Mammary epithelial cell (primary cell): ENCODE measurements at regions of chr15 and their contacts with region 1.

Region 1: DNA sequence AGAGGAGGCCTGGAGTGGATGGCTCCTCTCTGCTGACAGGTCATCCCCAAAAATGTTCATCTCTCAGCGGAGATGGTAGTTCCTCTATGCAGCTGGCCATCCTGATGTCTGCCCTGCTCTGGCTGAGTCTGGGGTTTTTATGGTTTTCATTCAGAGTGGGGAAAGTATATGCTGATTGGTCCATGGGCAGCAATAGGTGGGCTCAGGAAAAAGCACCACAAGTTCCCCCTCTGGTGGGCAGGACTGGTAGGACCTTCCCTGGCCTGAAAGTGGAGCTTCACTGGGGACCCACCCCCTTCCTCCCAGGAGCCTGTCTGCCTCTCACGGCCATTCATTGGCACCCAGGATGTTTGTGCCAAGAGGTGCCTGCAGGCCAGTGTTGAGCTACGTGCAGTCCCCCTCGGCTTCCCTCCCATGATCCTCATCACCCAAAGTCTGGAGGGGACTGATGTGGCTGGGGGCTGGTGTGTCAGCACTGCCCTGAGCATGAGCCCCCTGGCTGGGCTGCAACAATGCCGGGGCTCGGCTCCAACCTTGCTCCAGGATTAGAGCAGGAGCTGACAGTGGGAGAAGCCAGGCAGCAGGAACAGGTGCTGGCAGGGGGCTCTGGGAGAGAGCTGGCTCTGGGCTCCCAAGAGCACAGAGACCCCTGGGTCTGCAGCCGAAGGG is 13.1 kb upstream of the BLOC1S6 start:
- DNase-seq: no peak
- H3K4me3 ChIP-seq: no peak overlapping the region
- H3K27ac ChIP-seq: no peak overlapping the region
- H3K4me1 ChIP-seq: no peaks in the 10 kb centered on the region
- H3K27me3 ChIP-seq: peaks cover 5% of the 10 kb centered on the region
- CTCF ChIP-seq: peak; percentile 19 to 29

Region 2: GRCh38 chr15:45529613-45530012 is 44.5 kb before region 1 on chr15:
- CTCF ChIA-PET with region 1: no interaction called
- dilution Hi-C with region 1: loop called (anchors 5 kb)
- in situ Hi-C with region 1: no loop called
- intact Hi-C with region 1: no loop called
- DNase-seq: no peak
- H3K4me3 ChIP-seq: no peak overlapping the region
- H3K27ac ChIP-seq: no peak overlapping the region
- H3K4me1 ChIP-seq: no peaks in the 10 kb centered on the region
- H3K27me3 ChIP-seq: no peaks in the 10 kb centered on the region
- CTCF ChIP-seq: no peak

Region 3: GRCh38 chr15:45604326-45604725 is 30.2 kb after region 1 on chr15:
- CTCF ChIA-PET with region 1: no interaction called
- dilution Hi-C with region 1: no loop called
- in situ Hi-C with region 1: no loop called
- intact Hi-C with region 1: no loop called
- DNase-seq: no peak
- H3K4me3 ChIP-seq: no peak overlapping the region
- H3K27ac ChIP-seq: no peak overlapping the region
- H3K4me1 ChIP-seq: no peaks in the 10 kb centered on the region
- H3K27me3 ChIP-seq: no peaks in the 10 kb centered on the region
- CTCF ChIP-seq: no peak

Region 4: GRCh38 chr15:45660231-45660979 is 86.3 kb after region 1 on chr15:
- CTCF ChIA-PET with region 1: no interaction called
- dilution Hi-C with region 1: no loop called
- in situ Hi-C with region 1: loop called in 1 of 2 experiments (anchors 25 kb)
- intact Hi-C with region 1: no loop called
- DNase-seq: peak; percentile 33
- H3K4me3 ChIP-seq: no peak overlapping the region
- H3K27ac ChIP-seq: no peak overlapping the region
- H3K4me1 ChIP-seq: peaks cover 5% of the 10 kb centered on the region
- H3K27me3 ChIP-seq: no peaks in the 10 kb centered on the region
- CTCF ChIP-seq: peak; percentile 8 to 10